Activated B cell treated with CpG ODN at 0.5 μM for 24 hours (primary cell): ENCODE measurements at regions of chr22 and their contacts with region 1.

Region 1: GRCh38 chr22:22687638-22688500 is 43.5 kb downstream of the GGTLC2 start:
- DNase-seq: no peak
- ATAC-seq: no peak
- H3K4me3 Mint-ChIP-seq: peak overlapping the region; percentile 30
- H3K27ac Mint-ChIP-seq: no peak overlapping the region
- H3K4me1 Mint-ChIP-seq: peaks cover 55% of the 10 kb centered on the region
- H3K27me3 Mint-ChIP-seq: no peaks in the 10 kb centered on the region
- CTCF ChIP-seq: peak; percentile 22

Region 2: DNA sequence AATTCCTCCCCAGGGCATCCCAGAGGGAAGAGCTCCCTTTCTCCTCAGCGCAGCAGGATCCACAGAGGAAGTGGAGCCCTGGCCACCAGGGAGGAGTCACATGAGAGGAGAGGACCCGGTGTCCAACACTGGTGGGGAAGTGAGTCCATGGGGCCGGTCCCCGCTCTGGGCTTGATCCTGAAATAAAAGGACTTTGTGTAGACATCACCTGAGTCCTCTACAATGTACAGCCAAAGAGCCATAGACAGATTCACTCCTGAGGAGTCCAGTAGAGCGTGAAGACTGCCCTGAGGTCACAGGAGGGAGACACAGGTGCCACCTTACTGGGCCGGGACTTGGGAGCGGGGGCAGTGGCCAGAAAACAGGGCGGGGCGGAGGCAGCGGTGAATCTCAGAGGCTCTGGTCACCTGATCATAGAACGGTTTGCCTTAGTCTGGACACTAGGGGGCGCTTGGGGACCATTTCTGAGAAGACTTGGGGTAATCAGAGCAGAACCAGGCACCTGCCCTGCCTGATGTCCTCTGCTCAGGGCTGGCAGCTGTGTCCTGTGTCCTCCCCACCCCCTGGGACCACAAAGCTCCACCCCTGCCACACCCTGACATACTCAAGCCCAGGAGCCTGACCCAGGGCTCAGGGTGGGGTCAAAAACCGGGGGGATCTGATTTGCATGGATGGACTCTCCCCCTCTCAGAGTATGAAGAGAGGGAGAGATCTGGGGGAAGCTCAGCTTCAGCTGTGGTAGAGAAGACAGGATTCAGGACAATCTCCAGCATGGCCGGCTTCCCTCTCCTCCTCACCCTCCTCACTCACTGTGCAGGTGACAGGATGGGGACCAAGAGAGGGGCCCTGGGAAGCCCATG is 330.6 kb before region 1 on chr22:
- CTCF ChIA-PET with region 1: no interaction called
- POLR2A ChIA-PET with region 1: no interaction called
- intact Hi-C with region 1: loop called (anchors 10 kb)
- DNase-seq: peak; percentile 74
- ATAC-seq: peak; percentile 87
- H3K4me3 Mint-ChIP-seq: peak overlapping the region; percentile 65
- H3K27ac Mint-ChIP-seq: peak overlapping the region; percentile 79
- H3K4me1 Mint-ChIP-seq: peaks cover 55% of the 10 kb centered on the region
- H3K27me3 Mint-ChIP-seq: no peaks in the 10 kb centered on the region
- CTCF ChIP-seq: no peak

Region 3: GRCh38 chr22:22587577-22588188 is 100.2 kb before region 1 on chr22:
- CTCF ChIA-PET with region 1: interaction called, 7 read pairs
- POLR2A ChIA-PET with region 1: interaction called, 3 read pairs
- intact Hi-C with region 1: loop called (anchors 1 kb)
- DNase-seq: no peak
- ATAC-seq: no peak
- H3K4me3 Mint-ChIP-seq: no peak overlapping the region
- H3K27ac Mint-ChIP-seq: no peak overlapping the region
- H3K4me1 Mint-ChIP-seq: peaks cover 42% of the 10 kb centered on the region
- H3K27me3 Mint-ChIP-seq: no peaks in the 10 kb centered on the region
- CTCF ChIP-seq: no peak

Region 4: DNA sequence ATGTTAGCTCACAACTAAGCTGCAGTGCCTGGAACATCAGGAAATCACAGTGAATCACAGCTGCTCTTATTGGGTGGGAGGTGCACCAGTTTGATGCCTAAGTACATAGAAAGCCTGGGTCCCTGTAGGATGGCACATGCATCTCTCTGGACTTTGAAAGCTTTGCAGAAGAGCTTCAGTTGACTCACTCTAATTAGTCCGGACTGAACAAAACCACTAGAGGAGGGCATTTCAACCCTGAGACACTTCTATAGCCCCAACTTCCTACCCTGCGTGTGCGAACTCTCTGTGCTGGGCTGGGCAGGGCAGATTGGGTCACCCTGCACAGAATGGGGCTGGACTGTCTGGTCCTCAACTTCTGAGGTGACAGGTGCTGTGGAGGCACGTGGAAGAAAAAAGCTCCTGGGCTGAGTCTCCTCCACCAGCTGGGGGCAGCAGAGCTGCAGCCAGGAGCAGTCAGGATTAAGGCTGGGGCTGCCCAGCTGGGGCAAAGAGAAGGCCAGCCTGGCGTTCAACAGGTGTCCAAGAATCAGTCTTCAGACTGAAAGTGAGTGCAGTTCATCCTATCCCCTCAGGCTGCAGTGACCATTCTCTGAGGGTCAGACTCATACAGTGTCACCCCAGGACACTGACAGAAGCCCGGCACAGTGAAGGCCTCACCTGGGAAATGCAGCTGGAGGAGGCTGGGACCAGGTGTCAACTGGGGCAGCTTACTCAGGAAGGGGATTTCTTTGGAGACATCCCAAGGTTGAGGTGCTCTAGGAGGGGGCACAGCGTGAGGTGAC is 21.4 kb before region 1 on chr22:
- CTCF ChIA-PET with region 1: interaction called, 21 read pairs
- POLR2A ChIA-PET with region 1: no interaction called
- intact Hi-C with region 1: loop called (anchors 2 kb)
- DNase-seq: peak; percentile 30
- ATAC-seq: peak; percentile 82
- H3K4me3 Mint-ChIP-seq: no peak overlapping the region
- H3K27ac Mint-ChIP-seq: no peak overlapping the region
- H3K4me1 Mint-ChIP-seq: peaks cover 16% of the 10 kb centered on the region
- H3K27me3 Mint-ChIP-seq: peaks cover 2% of the 10 kb centered on the region
- CTCF ChIP-seq: no peak

Region 5: GRCh38 chr22:22720201-22720723 is 32.4 kb after region 1 on chr22:
- CTCF ChIA-PET with region 1: interaction called, 3 read pairs
- POLR2A ChIA-PET with region 1: interaction called, 5 read pairs
- intact Hi-C with region 1: loop called (anchors 2 kb)
- DNase-seq: peak; percentile 41
- ATAC-seq: peak; percentile 68
- H3K4me3 Mint-ChIP-seq: peak overlapping the region; percentile 68
- H3K27ac Mint-ChIP-seq: peak overlapping the region; percentile 94
- H3K4me1 Mint-ChIP-seq: peaks cover 58% of the 10 kb centered on the region
- H3K27me3 Mint-ChIP-seq: no peaks in the 10 kb centered on the region
- CTCF ChIP-seq: no peak

Region 6: GRCh38 chr22:22770280-22770871 is 82.5 kb after region 1 on chr22:
- CTCF ChIA-PET with region 1: no interaction called
- POLR2A ChIA-PET with region 1: no interaction called
- intact Hi-C with region 1: no loop called
- DNase-seq: no peak
- ATAC-seq: peak; percentile 40
- H3K4me3 Mint-ChIP-seq: no peak overlapping the region
- H3K27ac Mint-ChIP-seq: no peak overlapping the region
- H3K4me1 Mint-ChIP-seq: peaks cover 28% of the 10 kb centered on the region
- H3K27me3 Mint-ChIP-seq: peaks cover 17% of the 10 kb centered on the region
- CTCF ChIP-seq: peak; percentile 20

Region 7: DNA sequence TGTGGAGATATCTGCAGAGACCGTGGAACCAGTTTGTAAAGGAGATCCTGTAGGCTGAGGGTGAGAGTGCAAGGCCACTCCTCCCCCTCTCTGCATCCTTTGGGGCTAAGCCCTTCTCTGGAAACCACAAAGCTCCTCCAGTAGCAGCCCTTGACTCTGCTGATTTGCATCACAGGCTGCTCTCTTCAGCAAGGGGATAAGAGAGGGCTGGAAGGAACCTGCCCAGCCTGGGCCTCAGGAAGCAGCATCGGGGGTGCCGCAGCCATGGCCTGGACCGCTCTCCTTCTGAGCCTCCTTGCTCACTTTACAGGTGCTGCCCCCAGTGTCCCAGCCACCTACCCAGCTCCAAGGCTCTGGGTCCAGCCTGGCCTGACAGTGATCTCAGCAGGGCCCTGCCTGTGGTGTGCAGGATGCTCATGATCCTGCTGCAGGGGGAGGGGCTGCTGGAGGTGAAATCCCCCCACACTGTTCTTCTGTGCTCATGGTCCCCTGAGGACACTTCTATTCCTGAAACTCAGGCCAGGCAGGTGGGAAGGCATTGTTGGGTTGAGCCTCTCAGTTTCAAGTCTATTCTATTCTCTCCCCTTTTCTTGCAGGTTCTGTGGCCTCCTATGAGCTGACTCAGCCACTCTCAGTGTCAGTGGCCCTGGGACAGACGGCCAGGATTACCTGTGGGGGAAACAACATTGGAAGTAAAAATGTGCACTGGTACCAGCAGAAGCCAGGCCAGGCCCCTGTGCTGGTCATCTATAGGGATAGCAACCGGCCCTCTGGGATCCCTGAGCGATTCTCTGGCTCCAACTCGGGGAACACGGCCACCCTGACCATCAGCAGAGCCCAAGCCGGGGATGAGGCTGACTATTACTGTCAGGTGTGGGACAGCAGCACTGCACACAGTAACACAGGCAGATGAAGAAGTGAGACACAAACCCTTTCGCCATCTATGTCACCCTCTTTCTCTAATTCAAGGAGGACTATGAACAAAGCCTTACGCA is 131.3 kb after region 1 on chr22:
- CTCF ChIA-PET with region 1: no interaction called
- POLR2A ChIA-PET with region 1: no interaction called
- intact Hi-C with region 1: no loop called
- DNase-seq: no peak
- ATAC-seq: peak; percentile 72
- H3K4me3 Mint-ChIP-seq: no peak overlapping the region
- H3K27ac Mint-ChIP-seq: no peak overlapping the region
- H3K4me1 Mint-ChIP-seq: peaks cover 63% of the 10 kb centered on the region
- H3K27me3 Mint-ChIP-seq: peaks cover 18% of the 10 kb centered on the region
- CTCF ChIP-seq: no peak